Psoas muscle (tissue), 8 donors: ENCODE measurements at regions of chr5 and their contacts with region 1.

Region 1: DNA sequence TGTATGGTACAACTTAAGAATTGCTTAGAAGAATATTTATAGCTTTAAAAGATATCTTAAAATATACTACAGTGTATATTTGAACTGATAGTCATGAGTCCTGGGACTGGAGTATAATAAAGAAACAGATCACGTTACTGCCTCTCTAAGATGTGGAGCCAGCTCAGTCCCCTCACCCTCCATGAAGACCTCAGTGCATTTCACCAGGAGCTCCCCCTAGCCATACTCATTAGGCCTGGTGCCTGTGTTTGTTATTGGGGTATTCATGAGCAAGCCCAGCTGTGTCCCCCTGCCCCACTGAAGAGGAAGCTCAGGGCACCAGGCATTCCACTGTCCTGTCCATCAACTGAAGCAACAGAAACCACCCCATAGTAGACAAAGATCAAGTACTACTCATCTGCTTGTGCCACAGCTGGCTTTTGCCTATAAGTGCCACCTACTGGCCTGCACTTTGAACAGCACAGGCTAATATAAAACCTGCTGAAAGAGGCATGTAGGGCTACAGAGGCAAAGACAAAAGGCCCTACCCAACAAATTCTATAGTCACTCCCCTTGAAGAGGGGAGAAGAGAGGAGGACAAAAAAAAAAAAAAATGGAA is 850.2 kb upstream of the NUDT12 start:
- DNase-seq: no peak
- ATAC-seq: no peak
- H3K4me3 ChIP-seq: no peak overlapping the region
- H3K27ac ChIP-seq: no peak overlapping the region
- H3K4me1 ChIP-seq: no peaks in the 10 kb centered on the region
- H3K27me3 ChIP-seq: no peaks in the 10 kb centered on the region
- CTCF ChIP-seq: peak; percentile 25

Region 2: GRCh38 chr5:103942587-103943186 is 470.1 kb before region 1 on chr5:
- intact Hi-C with region 1: loop called in 1 of 2 experiments (anchors 10 kb)
- DNase-seq: no peak
- ATAC-seq: no peak
- H3K4me3 ChIP-seq: no peak overlapping the region
- H3K27ac ChIP-seq: no peak overlapping the region
- H3K4me1 ChIP-seq: no peaks in the 10 kb centered on the region
- H3K27me3 ChIP-seq: no peaks in the 10 kb centered on the region
- CTCF ChIP-seq: no peak